Motor neuron (in vitro differentiated cells): ENCODE measurements at regions of chr13 and their contacts with region 1.

Region 1: DNA sequence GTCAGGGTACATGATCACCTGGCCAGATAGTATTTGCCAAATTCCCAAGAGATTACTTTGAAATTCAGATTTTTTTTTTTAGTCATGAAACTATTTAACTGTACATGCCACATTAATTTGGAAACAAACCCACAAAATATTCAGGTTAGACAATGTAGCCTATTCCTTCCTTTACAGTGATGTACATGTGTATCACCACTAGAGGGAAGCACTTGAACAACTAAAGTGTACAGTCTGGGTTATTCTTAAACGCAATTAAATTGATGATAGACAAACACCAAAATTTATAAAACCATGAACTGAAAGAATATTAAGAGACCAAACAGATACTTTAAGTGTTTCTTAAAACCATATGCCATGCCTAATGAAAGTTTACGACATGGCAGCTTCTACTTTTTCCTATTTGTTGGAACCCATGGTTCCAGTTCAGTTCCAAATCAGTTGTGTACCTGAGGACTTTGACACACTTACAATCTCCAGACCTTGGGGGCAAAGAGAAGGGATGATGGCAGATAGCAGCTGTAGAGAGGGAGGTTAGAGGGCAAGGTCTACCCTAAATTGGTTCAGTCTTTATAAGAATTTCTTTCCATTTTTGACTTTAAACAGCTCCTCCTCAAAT is 52.8 kb downstream of the TNFSF13B start:
- ATAC-seq: peak in 7 of 8 experiments; percentile 50 to 89 (median 74)
- H3K4me3 ChIP-seq: no peak overlapping the region
- H3K27ac ChIP-seq: no peak overlapping the region
- H3K4me1 ChIP-seq: peaks cover 0 to 3% of the 10 kb centered on the region in 2 donors

Region 2: DNA sequence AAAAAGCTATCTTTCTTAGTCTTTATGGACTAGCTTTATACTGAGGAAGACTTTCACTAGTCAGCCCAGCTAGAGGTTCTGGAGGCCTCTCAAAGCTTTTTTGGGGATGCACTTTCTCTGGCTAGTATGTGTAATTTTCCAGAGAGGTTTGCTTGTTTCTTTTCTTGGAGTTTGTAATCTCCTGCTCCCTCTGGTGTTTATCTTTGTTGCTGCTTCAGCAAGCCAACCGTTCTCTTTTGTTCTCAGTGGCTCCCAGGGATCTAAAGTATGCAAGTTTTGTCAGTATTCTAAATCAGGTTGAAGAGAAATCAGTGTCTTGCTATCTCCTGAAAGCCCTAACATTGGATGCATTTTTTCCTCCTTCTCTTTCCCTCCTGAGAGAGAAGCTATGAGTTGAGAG is 185.9 kb after region 1 on chr13:
- in situ Hi-C with region 1: loop called in 1 of 9 experiments (anchors 10 kb)
- ATAC-seq: peak in 3 of 8 experiments; percentile 32 to 73 (median 48)
- H3K4me3 ChIP-seq: no peak overlapping the region
- H3K27ac ChIP-seq: no peak overlapping the region
- H3K4me1 ChIP-seq: no peaks in the 10 kb centered on the region